Left cardiac atrium (tissue), 4 donors: ENCODE measurements at regions of chr6 and their contacts with region 1.

Region 1: DNA sequence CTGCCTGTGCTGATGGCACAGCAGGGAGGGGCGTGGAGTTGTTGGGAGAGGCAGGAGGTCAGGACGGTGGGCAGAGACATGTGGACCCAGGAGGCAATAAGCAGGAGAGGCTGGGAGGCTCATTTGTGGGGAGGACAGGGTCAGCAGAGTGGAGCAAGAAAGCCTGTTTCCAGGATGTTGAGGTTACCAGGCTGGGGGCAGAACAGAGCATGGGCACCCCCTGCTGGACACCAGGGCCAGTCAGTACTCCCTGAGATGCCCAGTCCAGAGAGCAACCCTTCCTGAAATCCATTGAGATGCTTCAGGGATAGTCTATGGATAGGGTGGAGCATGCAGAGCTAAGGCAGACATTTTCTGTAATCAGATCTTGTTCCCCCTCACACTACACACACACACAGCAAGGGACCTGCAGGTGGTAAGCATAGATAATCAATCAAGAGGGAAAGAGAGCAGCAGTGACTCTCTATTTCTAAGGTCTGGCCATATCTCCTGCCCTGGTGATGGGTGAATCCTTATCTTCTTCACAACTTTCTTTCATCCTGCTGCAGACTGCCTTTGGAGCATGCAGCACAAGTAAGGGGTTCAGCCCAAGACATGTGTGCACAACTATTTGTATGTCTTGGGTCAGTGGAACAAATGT is 41.7 kb downstream of the MOCS1 start:
- DNase-seq: peak; percentile 76
- ATAC-seq: peak; percentile 62 to 70

Region 2: DNA sequence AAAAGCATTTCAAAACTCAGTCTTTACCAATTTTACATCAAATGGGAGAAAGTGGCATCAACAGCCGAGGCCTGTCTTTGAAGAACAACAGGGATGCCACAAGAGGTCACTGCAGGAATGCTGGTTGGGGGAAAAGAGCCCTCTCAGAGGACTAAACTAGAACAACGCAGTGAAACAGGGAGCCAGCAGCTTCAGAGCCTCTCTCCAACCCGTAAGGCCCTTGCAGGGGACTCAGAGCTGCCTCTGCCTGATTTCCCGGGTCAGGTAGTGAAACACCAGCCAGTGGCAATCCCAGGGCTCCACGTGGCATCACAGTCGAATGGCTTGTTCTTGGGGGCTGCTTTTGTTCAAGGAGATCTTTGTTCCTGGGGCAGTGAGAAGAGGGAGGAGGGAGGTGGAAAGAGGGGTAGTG is 515.1 kb before region 1 on chr6:
- intact Hi-C with region 1: loop called (anchors 2 to 5 kb)
- DNase-seq: peak; percentile 64
- ATAC-seq: peak; percentile 91 to 94